GM10248 (cell line): ENCODE measurements at regions of chr14 and their contacts with region 1.

Region 1: DNA sequence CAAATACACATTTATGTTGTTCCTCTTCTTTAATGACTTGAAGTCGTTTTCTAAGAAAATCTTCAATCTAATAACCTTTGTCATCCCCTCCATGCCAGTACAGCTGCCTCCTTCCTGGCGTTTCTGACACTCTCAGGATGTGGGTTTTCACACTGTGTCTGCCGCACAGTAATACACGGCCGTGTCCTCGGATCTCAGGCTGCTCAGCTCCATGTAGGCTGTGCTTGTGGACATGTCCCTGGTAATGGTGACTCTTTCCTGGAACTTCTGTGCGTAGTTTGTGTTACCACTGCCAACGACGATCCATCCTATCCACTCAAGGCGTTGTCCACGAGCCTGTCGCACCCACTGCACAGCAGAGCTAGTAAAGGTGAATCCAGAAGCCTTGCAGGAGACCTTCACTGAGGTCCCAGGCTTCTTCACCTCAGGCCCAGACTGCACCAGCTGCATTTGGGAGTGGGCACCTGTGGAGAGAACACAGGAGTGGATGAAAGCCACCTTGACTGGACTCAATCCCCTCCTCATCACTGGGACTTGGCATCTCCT is 1095.9 kb downstream of the TMEM121 start:
- DNase-seq: no peak
- CTCF ChIP-seq: no peak

Region 2: GRCh38 chr14:105917933-105918436 is 704.3 kb before region 1 on chr14:
- CTCF ChIA-PET with region 1: no interaction called
- POLR2A ChIA-PET with region 1: no interaction called
- DNase-seq: no peak
- CTCF ChIP-seq: no peak

Region 3: DNA sequence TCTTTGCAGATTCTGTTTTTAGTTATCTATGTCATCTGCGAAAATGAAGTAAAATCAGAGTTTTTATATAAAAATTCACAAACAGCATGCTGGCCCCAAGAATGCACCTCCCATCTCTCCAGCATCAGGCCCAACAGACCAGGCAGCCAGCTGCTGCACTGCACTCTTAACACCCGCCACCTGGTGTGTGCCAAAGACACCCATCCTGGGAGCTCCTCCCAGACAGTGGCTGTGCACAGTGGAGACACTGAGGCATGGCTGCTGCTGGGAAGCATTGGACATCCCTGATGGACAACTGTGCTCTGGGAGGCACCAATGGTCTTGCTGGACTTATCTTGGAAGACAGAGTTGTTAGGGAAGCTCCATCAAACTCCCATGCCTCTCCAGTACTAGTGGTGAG is 278.6 kb before region 1 on chr14:
- CTCF ChIA-PET with region 1: interaction called, 10 read pairs
- POLR2A ChIA-PET with region 1: no interaction called
- DNase-seq: no peak
- CTCF ChIP-seq: no peak

Region 4: GRCh38 chr14:106564058-106564656 is 58.1 kb before region 1 on chr14:
- CTCF ChIA-PET with region 1: interaction called, 16 read pairs
- POLR2A ChIA-PET with region 1: no interaction called
- DNase-seq: peak; percentile 62
- CTCF ChIP-seq: peak; percentile 87

Region 5: GRCh38 chr14:106599209-106599608 is 23.1 kb before region 1 on chr14:
- CTCF ChIA-PET with region 1: interaction called, 104 read pairs
- POLR2A ChIA-PET with region 1: no interaction called
- DNase-seq: no peak
- CTCF ChIP-seq: no peak

Region 6: GRCh38 chr14:106651016-106651415 is 28.7 kb after region 1 on chr14:
- CTCF ChIA-PET with region 1: interaction called, 17 read pairs
- POLR2A ChIA-PET with region 1: no interaction called
- DNase-seq: no peak
- CTCF ChIP-seq: no peak

Region 7: DNA sequence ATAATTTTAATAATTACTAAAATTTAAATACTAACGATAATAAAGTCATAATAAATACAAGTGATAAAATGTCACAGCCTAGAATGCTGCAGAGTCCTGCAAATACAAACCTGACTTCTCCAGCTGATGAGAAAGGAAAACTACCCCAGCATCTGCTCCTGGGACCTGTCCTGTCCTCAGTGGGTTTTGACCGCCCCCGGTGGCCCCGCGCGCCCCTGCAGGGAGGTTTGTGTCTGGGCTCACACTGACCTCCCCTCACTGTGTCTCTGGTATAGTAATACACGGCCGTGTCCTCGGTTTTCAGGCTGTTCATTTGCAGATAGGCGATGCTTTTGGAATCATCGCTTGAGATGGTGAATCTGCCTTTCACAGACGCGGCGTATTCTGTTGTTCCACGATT is 43.5 kb after region 1 on chr14:
- CTCF ChIA-PET with region 1: interaction called, 11 read pairs
- POLR2A ChIA-PET with region 1: no interaction called
- DNase-seq: no peak
- CTCF ChIP-seq: peak; percentile 14